ENCODE measurements at regions of chr17 and their contacts with region 1.

Region 1: GRCh38 chr17:29155227-29155965 is 24.8 kb downstream of the MYO18A start:
- DNase-seq: peak; percentile 88
- ATAC-seq: peak; percentile 98
- H3K4me3 Mint-ChIP-seq: peak overlapping the region; percentile 29
- H3K27ac Mint-ChIP-seq: peak overlapping the region; percentile 85
- H3K4me1 Mint-ChIP-seq: peaks cover 48% of the 10 kb centered on the region
- H3K27me3 Mint-ChIP-seq: no peaks in the 10 kb centered on the region
- CTCF ChIP-seq: no peak

Region 2: GRCh38 chr17:28571255-28572122 is 583.9 kb before region 1 on chr17 and contains the start of gene PIGS:
- CTCF ChIA-PET with region 1: no interaction called
- POLR2A ChIA-PET with region 1: no interaction called
- intact Hi-C with region 1: no loop called
- DNase-seq: peak; percentile 95
- ATAC-seq: peak; percentile 98
- H3K4me3 Mint-ChIP-seq: peak within 1 kb of the TSS; percentile 89
- H3K27ac Mint-ChIP-seq: peak within 1 kb of the TSS; percentile 93
- H3K4me1 Mint-ChIP-seq: peaks cover 48% of the 10 kb centered on the region
- H3K27me3 Mint-ChIP-seq: no peaks in the 10 kb centered on the region
- CTCF ChIP-seq: no peak
- total RNA-seq, gene PIGS: 33.8 to 36.9 TPM

Region 3: GRCh38 chr17:29140051-29140621 is 15.3 kb before region 1 on chr17:
- CTCF ChIA-PET with region 1: interaction called, 83 read pairs
- POLR2A ChIA-PET with region 1: interaction called, 22 read pairs
- intact Hi-C with region 1: no loop called
- DNase-seq: peak; percentile 96
- ATAC-seq: peak; percentile 74
- H3K4me3 Mint-ChIP-seq: peak overlapping the region; percentile 92
- H3K27ac Mint-ChIP-seq: peak overlapping the region; percentile 99
- H3K4me1 Mint-ChIP-seq: peaks cover 62% of the 10 kb centered on the region
- H3K27me3 Mint-ChIP-seq: no peaks in the 10 kb centered on the region
- CTCF ChIP-seq: no peak

Region 4: DNA sequence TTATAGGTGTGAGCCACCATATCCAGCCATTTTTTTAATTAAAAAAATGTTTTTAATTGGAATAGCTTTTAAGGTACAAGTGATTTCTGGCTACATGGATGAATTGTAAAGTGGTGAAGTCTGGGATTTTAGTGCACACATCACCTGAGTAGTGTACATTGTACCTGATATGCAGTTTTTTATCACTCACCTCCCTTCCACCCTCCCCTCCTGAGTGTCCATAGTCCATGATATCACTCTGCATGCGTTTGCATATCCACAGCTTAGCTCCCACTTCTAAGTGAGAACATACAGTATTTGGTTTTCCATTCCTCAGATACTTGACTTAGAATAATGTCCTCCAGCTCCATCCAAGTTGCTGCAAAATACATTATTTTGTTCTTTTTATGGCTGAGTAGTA is 77.9 kb after region 1 on chr17:
- CTCF ChIA-PET with region 1: no interaction called
- POLR2A ChIA-PET with region 1: no interaction called
- intact Hi-C with region 1: no loop called
- DNase-seq: no peak
- ATAC-seq: no peak
- H3K4me3 Mint-ChIP-seq: no peak overlapping the region
- H3K27ac Mint-ChIP-seq: no peak overlapping the region
- H3K4me1 Mint-ChIP-seq: no peaks in the 10 kb centered on the region
- H3K27me3 Mint-ChIP-seq: no peaks in the 10 kb centered on the region
- CTCF ChIP-seq: no peak

Region 5: DNA sequence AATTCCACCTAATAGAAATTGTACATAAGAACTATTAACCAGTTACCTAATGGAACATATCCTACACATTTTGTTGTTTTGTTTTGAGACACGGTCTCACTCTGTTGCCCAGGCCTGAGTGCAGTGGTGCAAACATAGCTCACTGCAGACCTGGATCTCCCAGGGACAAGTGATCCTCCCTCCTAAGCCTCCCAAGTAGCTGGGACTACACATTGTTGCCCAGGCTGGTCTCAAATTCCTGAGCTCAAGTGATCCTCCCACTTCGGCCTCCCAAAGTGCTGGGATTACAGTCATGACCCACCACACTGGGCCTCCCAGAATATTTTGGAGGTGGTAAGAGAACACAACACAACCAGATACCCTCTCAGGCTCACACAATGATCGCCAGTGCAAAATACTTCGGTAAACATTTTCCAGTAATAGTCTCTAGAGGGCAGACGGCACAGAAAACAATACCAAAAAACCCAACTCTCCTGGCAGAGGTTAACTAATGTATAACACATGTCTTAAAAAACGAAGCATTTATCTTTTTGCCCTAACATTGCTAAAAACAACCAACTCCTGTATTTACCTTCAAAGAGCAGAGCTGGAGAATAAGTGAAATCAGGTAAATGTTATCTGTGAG is 128.0 kb after region 1 on chr17:
- CTCF ChIA-PET with region 1: no interaction called
- POLR2A ChIA-PET with region 1: no interaction called
- intact Hi-C with region 1: no loop called
- DNase-seq: no peak
- ATAC-seq: peak; percentile 30
- H3K4me3 Mint-ChIP-seq: peak overlapping the region; percentile 20
- H3K27ac Mint-ChIP-seq: no peak overlapping the region
- H3K4me1 Mint-ChIP-seq: peaks cover 56% of the 10 kb centered on the region
- H3K27me3 Mint-ChIP-seq: no peaks in the 10 kb centered on the region
- CTCF ChIP-seq: peak; percentile 30

Measured in activated CD8-positive, alpha-beta T cell treated with anti-CD3 and anti-CD28 coated beads for 36 hours (primary cell).